ENCODE measurements at regions of chr19 and their contacts with region 1.

Region 1: GRCh38 chr19:19192078-19192882 is at the starts of genes BORCS8 and RFXANK:
- DNase-seq: peak; percentile 94 to 100
- H3K4me3 ChIP-seq: peak within 1 kb of the TSS; percentile 86 to 93
- H3K27ac ChIP-seq: peak within 1 kb of the TSS; percentile 97 to 99
- H3K4me1 ChIP-seq: peaks cover 26 to 33% of the 10 kb centered on the region in 2 donors
- H3K27me3 ChIP-seq: no peaks in the 10 kb centered on the region
- CTCF ChIP-seq: no peak
- total RNA-seq, gene BORCS8: 26.9 TPM
- total RNA-seq, gene RFXANK: 20.2 TPM

Region 2: DNA sequence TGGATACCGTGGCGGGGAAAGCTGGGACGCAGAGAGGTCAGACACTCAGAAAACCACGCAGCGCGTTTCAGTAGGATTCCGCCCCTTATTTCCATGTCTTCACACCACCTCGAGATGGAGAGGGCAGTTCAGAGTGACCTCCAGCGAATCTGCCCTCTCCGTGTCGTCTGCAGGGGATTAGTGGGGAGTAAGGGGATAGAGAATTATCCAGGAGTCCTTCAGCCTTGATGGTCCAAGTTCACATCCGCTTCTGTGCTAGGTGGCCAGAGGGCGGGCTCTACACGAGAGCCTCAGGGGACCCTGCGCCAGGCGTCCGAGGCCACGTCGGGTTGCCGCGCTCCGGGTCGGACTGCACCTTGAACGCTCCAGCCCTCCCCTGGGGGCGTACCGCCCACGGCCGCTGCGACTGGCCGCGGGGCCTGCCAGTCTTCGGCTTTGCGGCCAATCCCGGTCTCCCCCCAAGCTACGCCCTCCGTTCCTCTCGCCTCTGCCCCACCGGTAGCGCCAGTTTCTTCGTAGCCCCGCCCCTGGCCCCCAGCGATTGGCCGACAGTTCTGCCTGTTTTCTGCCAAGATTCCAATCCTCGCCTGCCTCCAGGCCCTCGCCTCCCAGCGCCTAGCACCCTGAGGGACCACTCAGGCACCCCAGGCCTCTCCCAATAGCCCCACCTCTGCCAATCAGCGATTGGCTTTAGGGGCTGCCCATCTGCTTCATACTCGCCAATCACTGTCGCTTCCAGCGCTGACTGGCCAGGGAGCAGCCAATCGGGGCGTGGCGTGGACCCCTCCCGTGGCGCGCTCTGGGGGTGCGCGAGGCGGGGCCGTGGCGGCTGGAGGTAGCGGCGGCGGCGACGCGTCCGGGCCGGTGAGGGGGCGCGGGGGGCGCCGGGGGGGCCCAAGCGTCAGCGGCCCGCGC is 128.8 kb before region 1 on chr19 and contains the start of gene SLC25A42:
- intact Hi-C with region 1: loop called (anchors 5 kb)
- DNase-seq: peak; percentile 99 to 100
- H3K4me3 ChIP-seq: peak within 1 kb of the TSS; percentile 81 to 95
- H3K27ac ChIP-seq: peak within 1 kb of the TSS; percentile 62 to 78
- H3K4me1 ChIP-seq: peaks cover 0 to 21% of the 10 kb centered on the region in 2 donors
- H3K27me3 ChIP-seq: no peaks in the 10 kb centered on the region
- CTCF ChIP-seq: no peak
- total RNA-seq, gene SLC25A42: 8.9 TPM

Region 3: GRCh38 chr19:19179548-19180441 is 12.5 kb before region 1 on chr19:
- intact Hi-C with region 1: no loop called
- DNase-seq: no peak
- H3K4me3 ChIP-seq: no peak overlapping the region
- H3K27ac ChIP-seq: no peak overlapping the region
- H3K4me1 ChIP-seq: no peaks in the 10 kb centered on the region
- H3K27me3 ChIP-seq: no peaks in the 10 kb centered on the region
- CTCF ChIP-seq: no peak

Region 4: DNA sequence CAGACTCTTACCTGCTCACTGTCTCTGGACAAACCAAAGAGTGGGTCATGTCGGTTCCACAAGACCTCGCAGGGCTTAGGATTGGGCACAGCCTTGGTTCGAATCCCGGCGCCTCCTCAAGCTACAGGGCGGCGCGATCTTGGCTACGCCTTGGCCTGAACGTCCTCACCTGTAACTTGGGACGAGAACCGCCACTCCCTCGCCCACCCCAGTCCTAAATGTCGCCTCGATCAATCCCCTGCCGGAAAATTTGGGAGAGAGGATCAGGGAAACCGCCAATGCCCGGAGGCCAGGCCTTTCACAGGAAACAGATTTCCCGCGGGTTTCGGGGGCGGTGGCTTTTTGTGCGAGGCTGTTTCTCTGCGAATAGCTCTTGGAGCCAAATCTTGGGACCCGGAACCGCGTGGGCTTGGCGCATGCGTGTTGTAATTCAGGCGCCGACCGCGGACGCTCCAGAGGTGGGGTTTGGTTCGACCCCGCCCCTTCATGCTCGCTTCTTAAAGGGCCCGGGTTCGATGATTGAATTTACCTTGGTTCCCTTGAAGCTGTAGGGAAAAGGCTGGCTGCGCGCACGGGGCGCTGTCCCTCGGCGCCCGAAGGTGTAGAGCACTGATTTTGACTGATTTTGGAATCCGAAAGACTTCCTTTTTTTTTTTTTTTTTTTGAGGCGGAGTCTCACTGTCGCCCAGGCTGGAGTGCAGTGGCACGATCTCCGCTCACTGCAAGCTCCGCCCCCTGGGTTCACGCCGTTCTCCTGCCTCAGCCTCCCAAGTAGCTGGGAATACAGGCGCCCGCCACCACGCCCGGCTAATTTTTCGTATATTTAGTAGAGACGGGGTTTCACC is 11.0 kb after region 1 on chr19 and contains the start of gene NR2C2AP:
- intact Hi-C with region 1: loop called (anchors 1 kb)
- DNase-seq: peak; percentile 46 to 94
- H3K4me3 ChIP-seq: peak within 1 kb of the TSS; percentile 65 to 81
- H3K27ac ChIP-seq: peak within 1 kb of the TSS; percentile 69 to 70
- H3K4me1 ChIP-seq: peaks cover 0 to 5% of the 10 kb centered on the region in 2 donors
- H3K27me3 ChIP-seq: no peaks in the 10 kb centered on the region
- CTCF ChIP-seq: no peak
- total RNA-seq, gene NR2C2AP: 16.5 TPM

Region 5: DNA sequence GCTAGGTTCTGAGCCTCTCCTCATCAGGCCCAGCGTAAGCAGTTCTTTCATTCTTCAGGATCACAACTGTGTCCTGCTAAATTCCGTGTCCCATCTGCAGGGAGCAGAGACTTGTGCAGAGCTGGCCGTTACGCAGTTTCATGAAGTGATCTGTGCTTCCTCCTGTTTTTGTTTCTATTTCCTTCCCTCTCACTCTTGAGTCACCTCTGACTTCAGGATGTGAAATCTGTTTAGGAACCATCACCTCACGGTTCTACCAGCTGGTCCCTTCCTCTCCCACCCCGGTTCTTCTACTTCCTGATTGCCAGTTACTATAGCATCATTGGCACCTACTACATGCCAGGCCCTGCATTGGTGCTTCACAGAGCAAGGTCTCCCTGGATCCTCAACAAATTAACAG is 136.8 kb after region 1 on chr19:
- intact Hi-C with region 1: no loop called
- DNase-seq: no peak
- H3K4me3 ChIP-seq: no peak overlapping the region
- H3K27ac ChIP-seq: no peak overlapping the region
- H3K4me1 ChIP-seq: no peaks in the 10 kb centered on the region
- H3K27me3 ChIP-seq: no peaks in the 10 kb centered on the region
- CTCF ChIP-seq: no peak

Region 6: DNA sequence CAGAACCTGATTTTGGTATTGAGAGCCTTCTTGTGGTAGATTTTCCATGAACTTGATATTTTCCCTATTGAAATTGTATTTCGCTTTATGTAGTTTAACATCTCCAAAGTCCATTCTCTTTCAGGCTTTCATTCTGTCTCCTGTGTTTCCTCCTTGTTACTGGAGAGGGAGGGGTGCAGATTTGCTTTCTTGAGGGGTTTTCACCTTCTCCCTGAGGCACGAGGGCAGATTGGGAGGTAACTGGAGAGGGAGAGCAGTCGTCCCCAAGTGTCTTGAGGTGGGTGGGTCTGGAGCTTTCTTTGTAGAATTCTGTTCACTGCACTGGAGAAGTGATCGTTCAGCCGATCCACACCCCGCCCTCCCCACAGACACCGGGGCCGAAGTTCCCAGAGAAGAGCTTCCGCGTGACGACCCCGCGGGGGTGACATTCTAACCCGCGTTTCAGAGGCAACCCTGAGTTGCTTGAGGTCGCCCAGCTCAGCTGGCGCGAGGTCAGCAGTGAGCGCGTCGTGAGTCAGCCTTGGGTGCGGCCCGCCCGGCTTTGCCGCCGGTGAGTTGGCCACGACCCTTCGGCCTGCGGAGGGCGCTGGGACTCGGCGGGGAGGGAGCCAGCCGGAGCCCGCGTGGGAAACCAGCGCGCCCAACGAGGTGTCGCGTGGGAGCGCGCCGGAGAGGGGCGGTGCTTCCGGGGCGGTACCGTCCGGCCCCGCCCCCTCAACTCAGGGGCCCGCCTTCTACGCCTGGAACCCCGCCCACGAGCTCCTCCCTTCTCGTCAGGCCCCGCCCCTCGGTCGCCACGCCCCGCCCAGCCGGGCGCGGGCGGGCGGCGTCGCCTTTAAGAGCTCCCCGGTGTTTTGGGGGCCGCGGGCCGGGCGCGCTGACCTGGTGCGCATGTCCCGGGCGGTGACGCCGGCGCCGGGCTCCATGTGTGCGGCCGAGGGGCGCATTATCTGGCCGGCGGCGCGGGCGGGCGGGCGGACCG is 212.9 kb after region 1 on chr19 and contains the start of gene GATAD2A:
- intact Hi-C with region 1: loop called (anchors 5 kb)
- DNase-seq: peak; percentile 77 to 96
- H3K4me3 ChIP-seq: peak within 1 kb of the TSS; percentile 91 to 99
- H3K27ac ChIP-seq: peak within 1 kb of the TSS; percentile 89 to 91
- H3K4me1 ChIP-seq: peaks cover 3 to 24% of the 10 kb centered on the region in 2 donors
- H3K27me3 ChIP-seq: no peaks in the 10 kb centered on the region
- CTCF ChIP-seq: peak; percentile 20 to 44 (median 44)
- total RNA-seq, gene GATAD2A: 63.3 TPM

Region 7: GRCh38 chr19:19515764-19516519 is 323.7 kb after region 1 on chr19 and contains the start of gene NDUFA13:
- intact Hi-C with region 1: loop called (anchors 10 kb)
- DNase-seq: peak; percentile 75 to 97
- H3K4me3 ChIP-seq: peak within 1 kb of the TSS; percentile 83 to 87
- H3K27ac ChIP-seq: peak within 1 kb of the TSS; percentile 75 to 80
- H3K4me1 ChIP-seq: peaks cover 6 to 14% of the 10 kb centered on the region in 2 donors
- H3K27me3 ChIP-seq: no peaks in the 10 kb centered on the region
- CTCF ChIP-seq: no peak
- total RNA-seq, gene NDUFA13: 12.7 TPM

Measured in ascending aorta (tissue), 2 donors.